ENCODE measurements at regions of chr22 and their contacts with region 1.

Region 1: GRCh38 chr22:46296257-46297150 is at the start of gene GTSE1:
- DNase-seq: peak; percentile 87
- ATAC-seq: peak; percentile 97
- H3K4me3 Mint-ChIP-seq: peak within 1 kb of the TSS; percentile 89
- H3K27ac Mint-ChIP-seq: peak within 1 kb of the TSS; percentile 98
- H3K4me1 Mint-ChIP-seq: peaks cover 48% of the 10 kb centered on the region
- H3K27me3 Mint-ChIP-seq: no peaks in the 10 kb centered on the region
- CTCF ChIP-seq: no peak
- total RNA-seq, gene GTSE1: 0.34 and 0.95 TPM in 2 replicates

Region 2: GRCh38 chr22:45994491-45995404 is 301.8 kb before region 1 on chr22:
- CTCF ChIA-PET with region 1: no interaction called
- POLR2A ChIA-PET with region 1: interaction called, 4 read pairs
- intact Hi-C with region 1: loop called (anchors 10 kb)
- DNase-seq: peak; percentile 79
- ATAC-seq: peak; percentile 51
- H3K4me3 Mint-ChIP-seq: no peak overlapping the region
- H3K27ac Mint-ChIP-seq: no peak overlapping the region
- H3K4me1 Mint-ChIP-seq: peaks cover 26% of the 10 kb centered on the region
- H3K27me3 Mint-ChIP-seq: peaks cover 2% of the 10 kb centered on the region
- CTCF ChIP-seq: peak; percentile 24

Region 3: GRCh38 chr22:46122511-46122971 is 174.0 kb before region 1 on chr22:
- CTCF ChIA-PET with region 1: interaction called, 16 read pairs
- POLR2A ChIA-PET with region 1: no interaction called
- intact Hi-C with region 1: loop called (anchors 1 kb)
- DNase-seq: peak; percentile 69
- ATAC-seq: peak; percentile 81
- H3K4me3 Mint-ChIP-seq: no peak overlapping the region
- H3K27ac Mint-ChIP-seq: no peak overlapping the region
- H3K4me1 Mint-ChIP-seq: no peaks in the 10 kb centered on the region
- H3K27me3 Mint-ChIP-seq: peaks cover 2% of the 10 kb centered on the region
- CTCF ChIP-seq: peak; percentile 95

Region 4: GRCh38 chr22:46150034-46150654 is 146.4 kb before region 1 on chr22 and contains the start of gene PPARA:
- CTCF ChIA-PET with region 1: no interaction called
- POLR2A ChIA-PET with region 1: interaction called, 12 read pairs
- intact Hi-C with region 1: loop called (anchors 1 kb)
- DNase-seq: peak; percentile 92
- ATAC-seq: peak; percentile 80
- H3K4me3 Mint-ChIP-seq: peak within 1 kb of the TSS; percentile 87
- H3K27ac Mint-ChIP-seq: peak within 1 kb of the TSS; percentile 73
- H3K4me1 Mint-ChIP-seq: peaks cover 23% of the 10 kb centered on the region
- H3K27me3 Mint-ChIP-seq: no peaks in the 10 kb centered on the region
- CTCF ChIP-seq: no peak
- total RNA-seq, gene PPARA: 17.7 and 23.0 TPM in 2 replicates

Region 5: GRCh38 chr22:46250035-46250782 is 46.3 kb before region 1 on chr22 and contains the start of gene CDPF1:
- CTCF ChIA-PET with region 1: no interaction called
- POLR2A ChIA-PET with region 1: interaction called, 29 read pairs
- intact Hi-C with region 1: loop called (anchors 1 kb)
- DNase-seq: peak; percentile 93
- ATAC-seq: peak; percentile 96
- H3K4me3 Mint-ChIP-seq: peak within 1 kb of the TSS; percentile 87
- H3K27ac Mint-ChIP-seq: peak within 1 kb of the TSS; percentile 79
- H3K4me1 Mint-ChIP-seq: peaks cover 18% of the 10 kb centered on the region
- H3K27me3 Mint-ChIP-seq: no peaks in the 10 kb centered on the region
- CTCF ChIP-seq: no peak
- total RNA-seq, gene CDPF1: 10.3 and 14.3 TPM in 2 replicates

Region 6: DNA sequence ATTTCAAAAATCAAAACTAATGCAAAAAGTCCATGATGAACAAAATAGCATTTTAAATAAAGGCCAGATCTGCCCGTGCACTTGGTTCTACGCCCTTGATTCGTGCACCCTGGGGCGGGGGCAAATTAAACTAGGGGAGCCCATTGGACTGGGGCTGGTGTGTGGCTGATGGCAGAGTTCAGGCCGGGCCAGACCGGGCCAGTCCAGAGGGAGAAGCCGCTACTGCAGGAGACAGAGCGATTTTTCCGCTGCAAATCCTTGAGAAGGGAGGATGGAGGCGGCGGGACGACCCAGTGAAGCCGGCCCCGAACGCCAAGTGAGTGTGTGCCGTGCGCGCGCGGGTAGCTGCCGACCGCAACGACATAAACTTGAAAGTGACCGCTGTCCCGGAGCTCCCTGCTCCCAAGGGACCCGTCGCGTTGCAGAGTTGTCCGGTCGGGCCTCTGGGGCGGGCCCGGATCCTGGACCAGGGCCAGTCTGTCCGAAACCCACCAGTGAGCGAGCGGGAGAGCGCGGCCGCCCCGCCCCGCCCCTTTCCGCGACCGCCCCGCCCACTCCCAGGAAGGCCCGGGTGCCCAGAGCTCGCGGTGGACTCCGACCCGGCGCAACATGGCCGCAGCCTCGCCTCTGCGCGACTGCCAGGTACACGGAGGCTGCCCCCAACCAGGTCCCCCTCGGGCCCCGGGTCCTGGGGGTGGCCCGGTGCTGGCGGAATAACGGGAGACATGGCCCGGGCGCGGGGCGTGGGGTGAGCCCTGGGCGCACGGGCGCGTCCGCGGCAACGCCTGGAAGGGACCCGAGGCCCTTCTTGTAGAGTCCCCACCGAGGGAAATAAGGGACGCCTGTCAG is 28.8 kb before region 1 on chr22 and contains the start of gene TTC38:
- CTCF ChIA-PET with region 1: interaction called, 5 read pairs
- POLR2A ChIA-PET with region 1: interaction called, 11 read pairs
- intact Hi-C with region 1: no loop called
- DNase-seq: peak; percentile 57
- ATAC-seq: peak; percentile 91
- H3K4me3 Mint-ChIP-seq: peak within 1 kb of the TSS; percentile 91
- H3K27ac Mint-ChIP-seq: peak within 1 kb of the TSS; percentile 66
- H3K4me1 Mint-ChIP-seq: peaks cover 15% of the 10 kb centered on the region
- H3K27me3 Mint-ChIP-seq: peaks cover 19% of the 10 kb centered on the region
- CTCF ChIP-seq: no peak
- total RNA-seq, gene TTC38: 9.8 and 11.8 TPM in 2 replicates

Region 7: GRCh38 chr22:46335201-46336118 is 39.0 kb after region 1 on chr22 and contains the start of gene TRMU:
- CTCF ChIA-PET with region 1: no interaction called
- POLR2A ChIA-PET with region 1: interaction called, 4 read pairs
- intact Hi-C with region 1: loop called (anchors 2 kb)
- DNase-seq: peak; percentile 82
- ATAC-seq: peak; percentile 92
- H3K4me3 Mint-ChIP-seq: peak within 1 kb of the TSS; percentile 93
- H3K27ac Mint-ChIP-seq: peak within 1 kb of the TSS; percentile 92
- H3K4me1 Mint-ChIP-seq: peaks cover 26% of the 10 kb centered on the region
- H3K27me3 Mint-ChIP-seq: no peaks in the 10 kb centered on the region
- CTCF ChIP-seq: no peak
- total RNA-seq, gene TRMU: 52.2 and 60.0 TPM in 2 replicates

Region 8: GRCh38 chr22:46346680-46347405 is 50.3 kb after region 1 on chr22:
- CTCF ChIA-PET with region 1: no interaction called
- POLR2A ChIA-PET with region 1: no interaction called
- intact Hi-C with region 1: no loop called
- DNase-seq: no peak
- ATAC-seq: no peak
- H3K4me3 Mint-ChIP-seq: no peak overlapping the region
- H3K27ac Mint-ChIP-seq: no peak overlapping the region
- H3K4me1 Mint-ChIP-seq: peaks cover 3% of the 10 kb centered on the region
- H3K27me3 Mint-ChIP-seq: no peaks in the 10 kb centered on the region
- CTCF ChIP-seq: no peak